HepG2 (cell line): ENCODE measurements at regions of chr13 and their contacts with region 1.

Region 1: GRCh38 chr13:99916366-99917103 is 55.0 kb downstream of the ZIC5 start:
- DNase-seq: peak; percentile 76
- ATAC-seq: peak; percentile 93
- H3K4me3 ChIP-seq: no peak overlapping the region
- H3K27ac ChIP-seq: no peak overlapping the region
- H3K4me1 ChIP-seq: peaks cover 14% of the 10 kb centered on the region
- H3K27me3 ChIP-seq: peaks cover 0 to 12% of the 10 kb centered on the region in 2 experiments; a peak in 4 of 5 replicates
- CTCF ChIP-seq: peak; percentile 90
- EP300 ChIP-seq: 0 out of 4 replicates have a peak, but pooled peaks of 1 of the 2 experiments have one; percentile 15
- POLR2A ChIP-seq: no peak
- RAD21 ChIP-seq: peak; percentile 79; the same call in 1 of the 2 replicates

Region 2: DNA sequence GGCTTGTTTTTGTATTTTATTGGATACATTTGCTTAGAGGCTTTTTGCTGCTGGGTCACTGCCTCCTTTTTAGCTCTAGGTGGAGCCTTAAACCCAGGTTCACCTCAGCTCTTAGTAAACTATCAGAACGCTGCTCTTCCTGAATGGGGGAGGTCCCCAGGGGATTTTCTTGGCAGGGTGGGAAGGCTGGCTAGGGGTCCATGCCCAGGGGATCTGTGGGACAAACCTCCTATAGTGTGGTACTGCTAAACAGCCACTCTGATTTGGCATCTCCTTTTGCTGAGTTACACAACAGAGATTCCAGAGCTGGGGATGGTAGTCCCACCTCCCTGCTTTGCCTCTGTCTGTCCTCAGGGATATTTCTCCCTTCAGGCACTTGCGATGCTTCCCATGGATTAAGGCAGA is 149.9 kb before region 1 on chr13:
- CTCF ChIA-PET with region 1: no interaction called
- POLR2A ChIA-PET with region 1: no interaction called
- in situ Hi-C with region 1: no loop called
- intact Hi-C with region 1: loop called (anchors 1 kb)
- DNase-seq: peak; percentile 6
- ATAC-seq: peak; percentile 86
- H3K4me3 ChIP-seq: no peak overlapping the region
- H3K27ac ChIP-seq: no peak overlapping the region
- H3K4me1 ChIP-seq: no peaks in the 10 kb centered on the region
- H3K27me3 ChIP-seq: no peaks in the 10 kb centered on the region
- CTCF ChIP-seq: peak; percentile 65
- EP300 ChIP-seq: no peak
- POLR2A ChIP-seq: no peak
- RAD21 ChIP-seq: 0 out of 2 replicates have a peak, but pooled peaks have one; percentile 33

Region 3: GRCh38 chr13:99969919-99970621 is 53.5 kb after region 1 on chr13:
- CTCF ChIA-PET with region 1: no interaction called
- POLR2A ChIA-PET with region 1: no interaction called
- in situ Hi-C with region 1: no loop called
- intact Hi-C with region 1: loop called (anchors 2 kb)
- DNase-seq: peak; percentile 57
- ATAC-seq: peak; percentile 73
- H3K4me3 ChIP-seq: peak overlapping the region; percentile 42 to 66 (median 50); a peak in 4 of 6 replicates
- H3K27ac ChIP-seq: no peak overlapping the region
- H3K4me1 ChIP-seq: peaks cover 7% of the 10 kb centered on the region; the same call in 1 of the 2 replicates
- H3K27me3 ChIP-seq: peaks cover 9 to 30% of the 10 kb centered on the region in 2 experiments
- CTCF ChIP-seq: 0 out of 2 replicates have a peak, but pooled peaks have one; percentile 4
- EP300 ChIP-seq: no peak
- POLR2A ChIP-seq: no peak
- RAD21 ChIP-seq: no peak

Region 4: GRCh38 chr13:100514788-100515409 is 598.4 kb after region 1 on chr13:
- CTCF ChIA-PET with region 1: interaction called, 30 read pairs
- POLR2A ChIA-PET with region 1: no interaction called
- in situ Hi-C with region 1: loop called (anchors 10 kb)
- intact Hi-C with region 1: loop called (anchors 1 kb)
- DNase-seq: peak; percentile 56
- ATAC-seq: peak; percentile 92
- H3K4me3 ChIP-seq: no peak overlapping the region
- H3K27ac ChIP-seq: no peak overlapping the region
- H3K4me1 ChIP-seq: peaks cover 31% of the 10 kb centered on the region
- H3K27me3 ChIP-seq: no peaks in the 10 kb centered on the region
- CTCF ChIP-seq: peak; percentile 93
- EP300 ChIP-seq: no peak
- POLR2A ChIP-seq: no peak
- RAD21 ChIP-seq: peak; percentile 84